ENCODE measurements at regions of chr11 and their contacts with region 1.

Region 1: DNA sequence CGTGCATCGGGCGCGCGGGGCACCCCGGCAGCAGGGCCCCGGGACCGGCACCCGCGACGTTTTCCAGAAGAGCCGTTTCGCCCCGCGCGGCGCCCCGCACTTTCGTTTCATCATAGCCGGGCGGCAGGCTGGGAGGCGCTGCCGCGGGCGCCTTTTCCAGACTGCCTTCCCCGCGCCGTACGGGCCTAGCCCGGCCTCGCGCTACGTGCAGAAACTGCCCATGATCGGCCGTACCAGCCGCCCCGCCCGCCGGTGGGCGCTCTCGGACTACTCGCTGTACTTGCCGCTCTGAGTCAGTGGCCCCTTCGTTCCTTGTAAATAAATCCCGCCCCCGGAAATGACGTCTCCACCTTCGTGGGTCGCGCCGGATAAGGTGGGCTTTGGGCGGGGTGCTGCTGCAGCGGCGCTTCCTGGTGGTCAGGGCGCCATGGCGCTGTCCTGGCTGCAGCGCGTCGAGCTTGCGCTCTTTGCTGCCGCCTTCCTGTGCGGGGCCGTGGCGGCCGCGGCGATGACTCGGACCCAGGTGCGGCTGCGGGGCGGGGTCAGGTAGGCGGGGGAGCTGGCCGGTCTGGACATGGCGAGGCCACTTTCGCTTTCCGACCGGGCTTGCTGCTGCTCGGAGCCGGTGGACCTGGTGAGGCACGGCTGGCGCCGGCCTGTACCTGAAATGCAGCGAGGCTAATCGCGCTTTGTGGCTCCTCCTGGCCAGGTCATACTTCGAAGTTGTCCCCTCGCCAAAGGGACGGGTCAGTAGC is at the start of gene TMEM179B:
- DNase-seq: peak; percentile 98
- H3K4me3 ChIP-seq: peak within 1 kb of the TSS; percentile 60
- H3K27ac ChIP-seq: peak within 1 kb of the TSS; percentile 74
- H3K4me1 ChIP-seq: peaks cover 32% of the 10 kb centered on the region
- H3K27me3 ChIP-seq: no peaks in the 10 kb centered on the region
- CTCF ChIP-seq: peak; percentile 29
- total RNA-seq, gene TMEM179B: 45.5 and 48.3 TPM in 2 replicates

Region 2: DNA sequence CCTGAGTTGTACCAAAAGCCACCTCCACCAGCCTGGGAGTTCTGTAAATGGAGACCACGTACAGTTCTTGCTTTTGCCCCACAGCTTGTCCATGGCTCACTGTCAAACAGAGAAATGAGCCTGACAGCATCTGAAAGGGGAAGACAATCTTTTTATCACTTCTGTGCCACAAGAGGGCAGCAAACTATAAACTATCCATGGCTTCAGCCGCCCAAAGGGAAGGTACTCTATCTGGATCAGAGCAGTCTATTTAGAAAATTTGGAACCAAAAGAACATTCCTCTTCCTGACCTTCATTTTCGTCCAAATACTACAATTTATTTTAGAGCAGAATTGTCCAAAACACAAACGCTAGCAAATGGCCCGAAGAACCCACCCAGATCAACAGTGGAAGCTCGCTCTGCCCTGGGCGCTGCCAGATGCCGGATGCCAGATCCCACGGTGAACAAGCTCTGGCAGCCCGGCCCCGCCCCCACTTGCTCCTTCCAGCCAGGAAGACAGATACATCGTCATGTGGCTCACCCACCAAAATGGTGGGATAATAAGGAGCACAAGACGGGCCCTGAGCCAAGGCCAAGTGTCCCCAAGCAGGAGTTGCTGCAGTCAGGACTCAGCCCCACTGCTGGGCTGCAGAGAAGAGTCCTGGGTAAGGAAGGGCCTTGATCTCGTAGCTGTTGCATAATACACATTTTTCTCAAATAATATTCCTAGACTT is 392.2 kb before region 1 on chr11:
- CTCF ChIA-PET with region 1: interaction called, 3 read pairs
- POLR2A ChIA-PET with region 1: no interaction called
- intact Hi-C with region 1: loop called (anchors 5 kb)
- DNase-seq: peak; percentile 71 to 75
- H3K4me3 ChIP-seq: no peak overlapping the region
- H3K27ac ChIP-seq: no peak overlapping the region
- H3K4me1 ChIP-seq: peaks cover 27% of the 10 kb centered on the region
- H3K27me3 ChIP-seq: no peaks in the 10 kb centered on the region
- CTCF ChIP-seq: peak; percentile 91

Region 3: GRCh38 chr11:62573592-62574362 is 213.4 kb before region 1 on chr11 and contains the start of gene EEF1G:
- CTCF ChIA-PET with region 1: no interaction called
- POLR2A ChIA-PET with region 1: no interaction called
- intact Hi-C with region 1: no loop called
- DNase-seq: peak; percentile 100
- H3K4me3 ChIP-seq: peak within 1 kb of the TSS; percentile 92
- H3K27ac ChIP-seq: peak within 1 kb of the TSS; percentile 86
- H3K4me1 ChIP-seq: peaks cover 42% of the 10 kb centered on the region
- H3K27me3 ChIP-seq: no peaks in the 10 kb centered on the region
- CTCF ChIP-seq: no peak
- total RNA-seq, gene EEF1G: 1,773 and 2,008 TPM in 2 replicates

Region 4: GRCh38 chr11:62601394-62602140 is 185.6 kb before region 1 on chr11 and contains the start of gene MTA2:
- CTCF ChIA-PET with region 1: no interaction called
- POLR2A ChIA-PET with region 1: interaction called, 15 read pairs
- intact Hi-C with region 1: no loop called
- DNase-seq: peak; percentile 97 to 100
- H3K4me3 ChIP-seq: peak within 1 kb of the TSS; percentile 95
- H3K27ac ChIP-seq: peak within 1 kb of the TSS; percentile 67
- H3K4me1 ChIP-seq: peaks cover 17% of the 10 kb centered on the region
- H3K27me3 ChIP-seq: no peaks in the 10 kb centered on the region
- CTCF ChIP-seq: no peak
- total RNA-seq, gene MTA2: 96.6 and 120 TPM in 2 replicates

Region 5: DNA sequence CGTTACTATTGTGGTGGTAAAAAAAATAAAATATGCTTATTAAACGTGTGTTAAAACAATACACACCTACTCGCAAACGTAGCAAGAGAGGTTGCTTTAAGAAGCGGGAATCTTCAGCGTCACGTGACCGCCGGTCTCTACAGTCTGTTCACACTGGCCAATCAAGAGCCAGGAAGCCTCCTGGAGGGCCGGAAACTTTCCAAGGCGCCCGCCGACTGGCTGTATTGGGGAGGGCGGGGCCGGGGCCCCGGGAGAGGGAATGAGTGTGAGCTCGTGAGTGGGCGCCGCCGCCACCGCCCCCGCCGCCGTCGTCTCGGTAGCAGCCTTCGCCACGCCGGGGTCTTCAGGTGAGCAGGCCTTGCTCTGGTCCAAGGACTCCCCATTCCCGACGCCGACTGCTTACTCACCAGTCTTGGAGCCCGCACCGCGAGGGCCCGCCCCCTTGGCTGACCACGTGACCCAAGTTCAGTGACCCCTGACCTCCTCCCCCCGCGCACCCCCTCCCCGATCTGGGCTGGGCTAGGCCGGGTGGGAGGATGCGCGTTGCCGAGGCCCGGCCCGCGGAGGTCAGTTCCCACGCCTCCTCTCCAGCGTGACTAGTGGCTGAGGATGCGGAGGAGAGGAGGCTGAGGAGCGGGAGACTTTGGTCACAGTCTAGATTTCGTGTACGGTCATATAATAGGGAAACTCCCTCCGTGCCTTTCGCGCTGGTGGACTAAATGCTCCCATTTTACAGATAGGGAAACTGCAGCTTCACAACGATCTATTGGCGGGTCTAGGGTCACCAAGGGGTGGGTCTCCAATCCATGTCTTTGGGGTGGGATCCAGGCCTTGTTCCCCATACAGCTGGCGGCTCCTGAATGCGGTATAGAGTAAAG is 15.8 kb before region 1 on chr11 and contains the start of gene TAF6L:
- CTCF ChIA-PET with region 1: interaction called, 18 read pairs
- POLR2A ChIA-PET with region 1: interaction called, 5 read pairs
- intact Hi-C with region 1: no loop called
- DNase-seq: peak; percentile 95 to 97
- H3K4me3 ChIP-seq: peak within 1 kb of the TSS; percentile 59
- H3K27ac ChIP-seq: peak within 1 kb of the TSS; percentile 77
- H3K4me1 ChIP-seq: peaks cover 14% of the 10 kb centered on the region
- H3K27me3 ChIP-seq: no peaks in the 10 kb centered on the region
- CTCF ChIP-seq: no peak
- total RNA-seq, gene TAF6L: 31.2 and 36.4 TPM in 2 replicates

Region 6: DNA sequence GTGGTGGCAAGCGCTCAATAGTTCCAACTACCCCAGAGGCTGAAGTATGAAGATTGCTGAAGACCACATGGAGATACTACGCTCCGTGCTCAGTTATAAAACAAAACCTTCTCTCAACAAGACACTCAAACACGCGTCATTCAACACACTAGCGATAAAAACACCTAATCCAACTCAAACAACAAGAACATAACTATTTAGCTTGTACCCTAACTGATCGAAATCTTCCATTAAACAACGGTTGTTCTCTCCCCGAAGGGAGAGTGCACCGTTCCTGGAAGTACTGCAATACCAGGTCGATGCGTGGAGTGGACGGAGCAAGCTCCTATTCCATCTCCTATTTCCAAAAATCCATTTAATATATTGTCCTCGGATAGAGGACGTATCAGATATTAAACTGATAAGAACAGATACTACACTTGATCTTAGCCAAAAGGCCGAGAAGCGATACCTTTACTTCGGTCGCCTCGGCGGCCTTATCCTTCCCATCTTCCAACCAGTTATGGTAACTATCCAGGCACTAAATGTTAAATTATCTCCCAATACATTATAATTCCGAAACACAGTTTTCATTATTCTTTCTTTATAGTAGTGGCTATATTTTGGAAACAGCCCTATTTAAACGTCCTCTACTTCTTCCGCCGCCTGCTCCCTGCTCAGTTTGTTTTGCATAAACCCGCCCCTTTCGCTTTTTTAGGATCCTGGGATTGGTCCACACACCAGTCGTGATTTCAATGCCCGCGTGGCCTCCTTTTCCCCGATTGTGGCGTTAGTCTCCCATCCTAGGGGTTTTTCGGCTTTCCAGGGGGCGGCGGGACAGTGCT is 54.4 kb after region 1 on chr11:
- CTCF ChIA-PET with region 1: no interaction called
- POLR2A ChIA-PET with region 1: interaction called, 9 read pairs
- intact Hi-C with region 1: loop called (anchors 1 kb)
- DNase-seq: peak; percentile 92 to 100
- H3K4me3 ChIP-seq: peak overlapping the region; percentile 89
- H3K27ac ChIP-seq: peak overlapping the region; percentile 94
- H3K4me1 ChIP-seq: peaks cover 17% of the 10 kb centered on the region
- H3K27me3 ChIP-seq: no peaks in the 10 kb centered on the region
- CTCF ChIP-seq: no peak

Region 7: GRCh38 chr11:63023841-63024648 is 236.9 kb after region 1 on chr11:
- CTCF ChIA-PET with region 1: interaction called, 6 read pairs
- POLR2A ChIA-PET with region 1: no interaction called
- intact Hi-C with region 1: loop called (anchors 5 kb)
- DNase-seq: peak; percentile 50 to 81
- H3K4me3 ChIP-seq: no peak overlapping the region
- H3K27ac ChIP-seq: no peak overlapping the region
- H3K4me1 ChIP-seq: no peaks in the 10 kb centered on the region
- H3K27me3 ChIP-seq: peaks cover 69% of the 10 kb centered on the region
- CTCF ChIP-seq: peak; percentile 100

Measured in PC-9 (cell line).